K562 (cell line): ENCODE measurements at regions of chr7 and their contacts with region 1.

Region 1: GRCh38 chr7:80699045-80699638 is 60.7 kb downstream of the CD36 start:
- DNase-seq: peak; percentile 22 to 54 (median 24)
- ATAC-seq: peak; percentile 75
- H3K4me3 ChIP-seq: no peak overlapping the region
- H3K27ac ChIP-seq: no peak overlapping the region
- H3K4me1 ChIP-seq: no peaks in the 10 kb centered on the region
- H3K27me3 ChIP-seq: no peaks in the 10 kb centered on the region
- CTCF ChIP-seq: peak in 2 of 3 experiments; percentile 50 to 66; a peak in 4 of 6 replicates
- EP300 ChIP-seq: no peak
- POLR2A ChIP-seq: no peak
- RAD21 ChIP-seq: peak; percentile 84 to 85

Region 2: GRCh38 chr7:80781561-80781979 is 82.4 kb after region 1 on chr7:
- CTCF ChIA-PET with region 1: no interaction called
- POLR2A ChIA-PET with region 1: no interaction called
- in situ Hi-C with region 1: no loop called
- intact Hi-C with region 1: no loop called
- DNase-seq: no peak
- ATAC-seq: no peak
- H3K4me3 ChIP-seq: no peak overlapping the region
- H3K27ac ChIP-seq: no peak overlapping the region
- H3K4me1 ChIP-seq: no peaks in the 10 kb centered on the region
- H3K27me3 ChIP-seq: no peaks in the 10 kb centered on the region
- CTCF ChIP-seq: no peak
- EP300 ChIP-seq: no peak
- POLR2A ChIP-seq: no peak
- RAD21 ChIP-seq: no peak

Region 3: DNA sequence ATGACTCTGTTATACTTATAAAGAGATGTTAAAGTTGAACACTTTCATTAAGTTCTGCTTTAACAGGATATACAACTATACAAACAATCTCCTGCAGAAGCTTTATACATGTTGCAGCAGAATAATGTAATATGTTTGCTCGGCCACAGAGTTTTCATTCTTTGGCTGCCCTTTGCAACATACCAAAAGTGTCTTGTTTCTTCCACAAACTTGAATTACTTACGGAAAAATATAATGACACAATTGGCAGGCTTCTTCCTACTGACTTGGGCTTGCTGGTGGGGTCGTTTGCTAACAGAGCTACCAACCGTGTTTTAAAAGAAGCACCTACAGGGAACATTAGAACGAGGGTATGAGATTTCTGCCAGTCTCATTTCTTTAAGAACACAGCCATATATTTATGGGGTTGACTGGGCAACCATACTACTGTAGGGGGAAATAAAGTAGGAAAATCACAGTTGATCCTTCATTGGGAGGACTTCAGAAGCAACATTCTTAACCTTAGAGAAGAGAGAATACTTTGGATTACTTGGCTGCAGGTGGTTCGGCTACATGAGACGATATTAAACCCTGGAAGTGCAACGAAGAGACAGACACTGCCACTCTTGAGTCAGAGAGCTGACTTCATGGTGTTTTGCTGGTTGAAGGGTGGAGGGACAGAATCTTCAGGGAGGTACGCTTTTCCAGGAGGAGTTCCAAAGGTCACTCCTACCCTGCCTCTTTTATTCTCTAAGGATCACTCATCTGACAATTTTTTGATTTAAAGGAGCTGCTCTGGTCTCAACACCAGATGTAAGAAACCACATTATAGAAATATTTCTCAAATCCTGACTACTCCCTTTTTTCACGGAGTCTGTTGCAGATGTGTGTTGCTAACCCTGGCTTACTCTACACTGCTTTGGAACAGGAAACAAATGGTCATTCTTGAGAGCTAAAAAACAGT is 95.8 kb after region 1 on chr7:
- CTCF ChIA-PET with region 1: no interaction called
- POLR2A ChIA-PET with region 1: no interaction called
- in situ Hi-C with region 1: no loop called
- intact Hi-C with region 1: no loop called
- DNase-seq: no peak
- ATAC-seq: no peak
- H3K4me3 ChIP-seq: no peak overlapping the region
- H3K27ac ChIP-seq: no peak overlapping the region
- H3K4me1 ChIP-seq: no peaks in the 10 kb centered on the region
- H3K27me3 ChIP-seq: no peaks in the 10 kb centered on the region
- CTCF ChIP-seq: no peak
- EP300 ChIP-seq: no peak
- POLR2A ChIP-seq: no peak
- RAD21 ChIP-seq: no peak

Region 4: GRCh38 chr7:81190997-81191768 is 492.0 kb after region 1 on chr7:
- CTCF ChIA-PET with region 1: no interaction called
- POLR2A ChIA-PET with region 1: no interaction called
- in situ Hi-C with region 1: no loop called
- intact Hi-C with region 1: no loop called
- DNase-seq: peak in 1 of 4 experiments; percentile 21
- ATAC-seq: peak; percentile 72
- H3K4me3 ChIP-seq: no peak overlapping the region
- H3K27ac ChIP-seq: no peak overlapping the region
- H3K4me1 ChIP-seq: peaks cover 0 to 6% of the 10 kb centered on the region in 2 experiments; a peak in 1 of 5 replicates
- H3K27me3 ChIP-seq: no peaks in the 10 kb centered on the region
- CTCF ChIP-seq: no peak
- EP300 ChIP-seq: no peak
- POLR2A ChIP-seq: no peak
- RAD21 ChIP-seq: no peak

Region 5: DNA sequence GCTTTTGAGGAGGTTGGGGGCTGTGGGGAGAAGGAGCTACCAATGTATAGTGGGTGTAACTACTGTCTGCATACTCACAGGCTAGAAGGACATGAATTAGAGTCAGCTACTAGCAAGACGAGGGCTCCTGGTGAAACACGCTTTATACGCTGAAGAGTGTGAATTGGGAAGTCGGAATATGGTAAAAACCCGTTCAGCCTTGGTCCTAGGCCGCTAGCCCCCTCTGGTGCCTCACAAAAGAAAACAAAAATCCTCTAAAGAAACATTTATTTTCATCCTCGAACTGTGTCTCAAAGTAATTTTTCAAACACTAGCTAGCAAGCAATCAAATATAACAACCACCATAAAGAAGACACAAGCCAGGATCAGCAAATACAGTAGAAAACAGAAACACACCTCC is 557.8 kb after region 1 on chr7:
- CTCF ChIA-PET with region 1: interaction called, 4 read pairs
- POLR2A ChIA-PET with region 1: no interaction called
- in situ Hi-C with region 1: no loop called
- intact Hi-C with region 1: loop called (anchors 10 kb)
- DNase-seq: peak in 1 of 4 experiments; percentile 37
- ATAC-seq: peak; percentile 66; the same call in 2 of the 3 replicates
- H3K4me3 ChIP-seq: no peak overlapping the region
- H3K27ac ChIP-seq: no peak overlapping the region
- H3K4me1 ChIP-seq: no peaks in the 10 kb centered on the region
- H3K27me3 ChIP-seq: no peaks in the 10 kb centered on the region
- CTCF ChIP-seq: peak; percentile 20 to 31 (median 29); a peak in 3 of 6 replicates
- EP300 ChIP-seq: no peak
- POLR2A ChIP-seq: no peak
- RAD21 ChIP-seq: peak in 1 of 2 experiments; percentile 65; a peak in 3 of 4 replicates

Region 6: DNA sequence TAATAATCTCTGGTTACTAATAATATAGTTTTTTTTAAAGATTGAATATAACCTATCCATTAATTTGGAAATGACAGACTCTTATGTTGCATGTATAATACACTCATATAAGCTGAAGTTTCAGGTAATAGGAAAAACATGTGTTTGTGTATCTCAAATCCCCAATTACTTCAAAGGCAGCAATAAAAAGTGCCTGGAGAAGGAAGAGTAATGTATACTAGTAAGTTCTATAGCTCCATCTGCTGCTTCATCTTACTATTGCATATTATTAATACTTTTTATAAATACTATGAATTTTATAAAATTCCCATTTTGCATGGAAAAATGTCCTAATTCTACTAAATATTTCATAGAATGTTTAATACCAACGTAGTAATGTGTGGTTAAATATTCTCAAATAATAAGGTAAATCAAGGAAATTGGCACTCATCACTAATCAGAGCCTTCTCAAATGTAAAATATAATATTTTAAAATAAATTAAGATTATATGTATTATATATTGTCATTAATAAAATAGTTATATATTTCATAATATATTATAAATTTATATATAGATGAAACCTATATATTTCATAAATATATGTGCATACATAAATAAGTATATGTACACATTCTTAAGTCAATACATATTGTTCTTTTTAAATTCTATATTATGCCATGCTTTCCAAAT is 758.8 kb after region 1 on chr7:
- CTCF ChIA-PET with region 1: interaction called, 6 read pairs
- POLR2A ChIA-PET with region 1: no interaction called
- in situ Hi-C with region 1: no loop called
- intact Hi-C with region 1: loop called (anchors 5 kb)
- DNase-seq: no peak
- ATAC-seq: no peak
- H3K4me3 ChIP-seq: no peak overlapping the region
- H3K27ac ChIP-seq: no peak overlapping the region
- H3K4me1 ChIP-seq: peaks cover 0 to 8% of the 10 kb centered on the region in 2 experiments; a peak in 1 of 5 replicates
- H3K27me3 ChIP-seq: no peaks in the 10 kb centered on the region
- CTCF ChIP-seq: peak in 1 of 3 experiments; percentile 26; a peak in 2 of 6 replicates
- EP300 ChIP-seq: no peak
- POLR2A ChIP-seq: no peak
- RAD21 ChIP-seq: peak; percentile 29 to 31; a peak in 2 of 4 replicates

Region 7: GRCh38 chr7:81469869-81470723 is 771.0 kb after region 1 on chr7:
- CTCF ChIA-PET with region 1: interaction called, 11 read pairs
- POLR2A ChIA-PET with region 1: no interaction called
- in situ Hi-C with region 1: loop called (anchors 10 kb)
- intact Hi-C with region 1: loop called (anchors 2 kb)
- DNase-seq: peak; percentile 14 to 54 (median 15)
- ATAC-seq: peak; percentile 77
- H3K4me3 ChIP-seq: no peak overlapping the region
- H3K27ac ChIP-seq: no peak overlapping the region
- H3K4me1 ChIP-seq: no peaks in the 10 kb centered on the region
- H3K27me3 ChIP-seq: no peaks in the 10 kb centered on the region
- CTCF ChIP-seq: peak; percentile 51 to 69 (median 60); a peak in 5 of 6 replicates
- EP300 ChIP-seq: no peak
- POLR2A ChIP-seq: no peak
- RAD21 ChIP-seq: peak; percentile 62 to 78